Activated naive CD4-positive, alpha-beta T cell treated with anti-CD3 and anti-CD28 coated beads for 36 hours (primary cell): ENCODE measurements at regions of chr22 and their contacts with region 1.

Region 1: GRCh38 chr22:37244114-37244921 is at the start of gene RAC2:
- DNase-seq: peak; percentile 94
- H3K4me3 Mint-ChIP-seq: peak within 1 kb of the TSS; percentile 99
- H3K27ac Mint-ChIP-seq: peak within 1 kb of the TSS; percentile 99
- H3K4me1 Mint-ChIP-seq: peaks cover 38% of the 10 kb centered on the region
- H3K27me3 Mint-ChIP-seq: no peaks in the 10 kb centered on the region
- total RNA-seq, gene RAC2: 728 to 759 TPM

Region 2: GRCh38 chr22:37218771-37219411 is 25.4 kb before region 1 on chr22:
- CTCF ChIA-PET with region 1: interaction called, 4 read pairs
- intact Hi-C with region 1: loop called (anchors 1 kb)
- DNase-seq: peak; percentile 86
- H3K4me3 Mint-ChIP-seq: peak overlapping the region; percentile 88
- H3K27ac Mint-ChIP-seq: peak overlapping the region; percentile 98
- H3K4me1 Mint-ChIP-seq: peaks cover 75% of the 10 kb centered on the region
- H3K27me3 Mint-ChIP-seq: no peaks in the 10 kb centered on the region

Region 3: DNA sequence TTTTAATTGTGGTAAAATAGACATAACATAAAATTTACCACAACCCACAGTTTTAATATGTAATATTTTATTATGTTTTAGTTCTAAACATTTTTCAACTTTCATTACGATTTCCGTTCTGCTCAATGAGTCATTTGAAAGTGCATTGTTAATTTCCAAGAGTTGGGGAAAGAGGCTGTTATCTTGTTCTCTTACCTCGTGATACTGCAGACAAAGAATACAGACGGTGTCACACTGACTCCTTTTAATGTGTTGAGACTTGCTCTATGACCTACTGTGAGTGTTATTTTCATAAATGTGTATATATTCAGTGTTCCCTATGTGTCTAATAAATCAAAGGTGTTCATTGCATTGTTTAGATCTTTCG is 10.5 kb after region 1 on chr22:
- CTCF ChIA-PET with region 1: interaction called, 220 read pairs
- intact Hi-C with region 1: loop called (anchors 1 kb)
- DNase-seq: no peak
- H3K4me3 Mint-ChIP-seq: no peak overlapping the region
- H3K27ac Mint-ChIP-seq: no peak overlapping the region
- H3K4me1 Mint-ChIP-seq: peaks cover 41% of the 10 kb centered on the region
- H3K27me3 Mint-ChIP-seq: no peaks in the 10 kb centered on the region

Region 4: DNA sequence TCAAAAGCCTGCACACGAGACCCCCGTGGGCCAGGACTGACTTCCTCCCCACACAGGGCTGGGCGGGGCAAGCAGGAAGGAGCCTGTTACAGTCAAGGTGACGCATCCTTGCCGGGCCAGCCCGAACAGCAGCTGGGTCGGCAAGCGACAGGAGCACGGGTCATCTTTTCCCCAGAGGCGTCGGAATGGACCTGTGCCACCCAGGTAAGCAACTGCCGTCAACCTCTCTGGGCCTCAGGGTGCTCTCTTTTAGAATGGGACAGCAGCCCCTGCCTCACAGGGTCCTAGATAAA is 38.0 kb after region 1 on chr22 and contains the start of gene CYTH4:
- CTCF ChIA-PET with region 1: interaction called, 4 read pairs
- intact Hi-C with region 1: loop called (anchors 2 kb)
- DNase-seq: peak; percentile 88
- H3K4me3 Mint-ChIP-seq: peak within 1 kb of the TSS; percentile 85
- H3K27ac Mint-ChIP-seq: peak within 1 kb of the TSS; percentile 97
- H3K4me1 Mint-ChIP-seq: peaks cover 53% of the 10 kb centered on the region
- H3K27me3 Mint-ChIP-seq: no peaks in the 10 kb centered on the region
- total RNA-seq, gene CYTH4: 30.5 to 34.0 TPM